ENCODE measurements at regions of chr5 and their contacts with region 1.

Region 1: DNA sequence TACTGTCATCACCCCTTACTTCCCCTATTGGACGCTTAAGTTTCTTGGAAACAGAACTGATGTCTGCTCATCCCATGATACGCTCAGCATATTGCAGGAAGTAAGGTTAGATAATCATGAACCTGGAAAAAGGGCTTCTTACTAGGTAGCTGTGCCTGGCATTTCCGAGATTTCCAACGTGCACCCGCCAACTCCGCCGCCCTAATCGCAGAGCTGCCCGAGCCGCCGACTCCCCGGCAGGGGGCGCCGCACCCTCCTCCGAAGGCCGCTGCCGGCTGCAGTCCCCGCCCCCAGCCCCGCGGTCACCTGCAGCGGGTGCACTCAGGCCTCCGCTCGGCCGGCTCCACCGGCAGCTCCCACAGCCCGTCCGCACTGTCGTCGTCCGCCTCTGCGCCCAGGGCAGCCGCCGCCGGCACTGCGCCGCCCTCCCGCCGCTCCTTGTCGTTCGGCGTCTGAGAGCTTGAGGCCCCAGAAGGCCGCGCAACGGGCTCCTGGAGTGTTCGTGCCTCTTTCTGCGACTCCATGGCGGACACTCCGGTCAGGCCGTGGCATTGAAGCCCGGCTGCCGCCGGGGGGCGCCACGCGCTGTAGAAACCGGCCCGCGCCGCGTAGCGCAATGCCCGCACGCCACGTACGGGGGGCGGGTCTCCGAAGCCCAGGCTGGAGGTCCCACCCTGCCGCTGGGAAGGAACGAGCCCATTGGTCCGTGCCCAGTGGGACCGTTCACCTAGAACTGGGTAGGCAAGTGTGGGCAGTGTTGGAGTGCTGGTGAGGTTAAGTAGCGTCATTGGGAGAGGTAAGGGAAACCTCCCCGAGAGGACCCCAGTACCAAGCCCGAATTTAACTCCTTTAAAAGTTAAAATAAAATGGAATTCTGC is at the start of gene DTWD2:
- DNase-seq: peak; percentile 94
- ATAC-seq: peak; percentile 92
- H3K4me3 Mint-ChIP-seq: peak within 1 kb of the TSS; percentile 77
- H3K27ac Mint-ChIP-seq: peak within 1 kb of the TSS; percentile 80
- H3K4me1 Mint-ChIP-seq: peaks cover 27% of the 10 kb centered on the region
- H3K27me3 Mint-ChIP-seq: no peaks in the 10 kb centered on the region
- CTCF ChIP-seq: peak; percentile 99
- total RNA-seq, gene DTWD2: 5.4 to 6.7 TPM

Region 2: GRCh38 chr5:118762291-118762690 is 225.9 kb before region 1 on chr5:
- CTCF ChIA-PET with region 1: no interaction called
- POLR2A ChIA-PET with region 1: no interaction called
- intact Hi-C with region 1: no loop called
- DNase-seq: no peak
- ATAC-seq: no peak
- H3K4me3 Mint-ChIP-seq: no peak overlapping the region
- H3K27ac Mint-ChIP-seq: no peak overlapping the region
- H3K4me1 Mint-ChIP-seq: no peaks in the 10 kb centered on the region
- H3K27me3 Mint-ChIP-seq: no peaks in the 10 kb centered on the region
- CTCF ChIP-seq: no peak

Region 3: GRCh38 chr5:118882666-118883065 is 105.6 kb before region 1 on chr5:
- CTCF ChIA-PET with region 1: no interaction called
- POLR2A ChIA-PET with region 1: no interaction called
- intact Hi-C with region 1: no loop called
- DNase-seq: no peak
- ATAC-seq: no peak
- H3K4me3 Mint-ChIP-seq: no peak overlapping the region
- H3K27ac Mint-ChIP-seq: no peak overlapping the region
- H3K4me1 Mint-ChIP-seq: no peaks in the 10 kb centered on the region
- H3K27me3 Mint-ChIP-seq: no peaks in the 10 kb centered on the region
- CTCF ChIP-seq: no peak

Region 4: GRCh38 chr5:119009131-119009530 is 20.9 kb after region 1 on chr5:
- CTCF ChIA-PET with region 1: interaction called, 34 read pairs
- POLR2A ChIA-PET with region 1: interaction called, 4 read pairs
- intact Hi-C with region 1: no loop called
- DNase-seq: no peak
- ATAC-seq: no peak
- H3K4me3 Mint-ChIP-seq: no peak overlapping the region
- H3K27ac Mint-ChIP-seq: no peak overlapping the region
- H3K4me1 Mint-ChIP-seq: no peaks in the 10 kb centered on the region
- H3K27me3 Mint-ChIP-seq: no peaks in the 10 kb centered on the region
- CTCF ChIP-seq: no peak

Region 5: DNA sequence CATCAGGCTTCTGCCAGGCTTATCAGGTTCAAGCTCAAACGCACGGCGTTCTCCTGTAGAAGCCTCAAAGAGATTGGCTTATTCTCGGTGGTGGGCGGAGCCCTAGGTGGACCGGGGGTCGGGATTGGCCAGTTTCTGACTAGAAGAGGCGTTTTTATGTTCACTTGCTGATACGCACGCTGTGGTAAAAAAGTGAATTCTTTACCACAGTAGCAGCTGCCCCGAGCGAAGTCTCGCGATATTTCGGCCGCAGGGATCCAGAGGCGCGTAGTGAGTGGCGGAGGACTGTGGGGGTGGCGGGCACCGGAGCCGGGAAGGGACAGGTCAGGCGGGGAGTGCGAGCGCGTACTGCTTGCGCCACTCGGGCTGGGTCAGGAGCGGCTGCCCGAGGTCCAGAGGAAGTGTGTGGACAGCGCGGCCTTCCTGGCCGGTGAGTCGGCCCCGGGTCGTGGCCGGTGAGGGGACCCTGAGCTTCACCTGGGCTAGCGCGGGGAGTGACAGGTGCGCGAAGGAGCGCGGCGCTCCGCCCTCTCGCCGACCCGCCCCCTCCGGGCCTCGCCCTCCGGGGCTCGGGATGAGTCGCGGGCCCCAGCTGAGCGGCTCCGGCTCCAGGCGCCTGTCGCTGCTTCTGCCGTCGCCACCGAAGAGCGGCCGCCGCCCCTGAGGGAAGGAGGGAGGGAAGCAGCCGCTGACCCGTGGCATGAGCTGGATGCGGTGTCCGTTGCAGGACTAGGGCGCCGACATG is 82.8 kb after region 1 on chr5 and contains the start of gene DMXL1:
- CTCF ChIA-PET with region 1: interaction called, 25 read pairs
- POLR2A ChIA-PET with region 1: no interaction called
- intact Hi-C with region 1: loop called (anchors 5 kb)
- DNase-seq: peak; percentile 99
- ATAC-seq: peak; percentile 87
- H3K4me3 Mint-ChIP-seq: peak within 1 kb of the TSS; percentile 85
- H3K27ac Mint-ChIP-seq: peak within 1 kb of the TSS; percentile 99
- H3K4me1 Mint-ChIP-seq: peaks cover 26% of the 10 kb centered on the region
- H3K27me3 Mint-ChIP-seq: peaks cover 1% of the 10 kb centered on the region
- CTCF ChIP-seq: no peak
- total RNA-seq, gene DMXL1: 20.8 to 23.3 TPM

Region 6: GRCh38 chr5:119255571-119256356 is 267.5 kb after region 1 on chr5:
- CTCF ChIA-PET with region 1: interaction called, 14 read pairs
- POLR2A ChIA-PET with region 1: no interaction called
- intact Hi-C with region 1: no loop called
- DNase-seq: peak; percentile 30
- ATAC-seq: peak; percentile 83
- H3K4me3 Mint-ChIP-seq: no peak overlapping the region
- H3K27ac Mint-ChIP-seq: no peak overlapping the region
- H3K4me1 Mint-ChIP-seq: peaks cover 14% of the 10 kb centered on the region
- H3K27me3 Mint-ChIP-seq: no peaks in the 10 kb centered on the region
- CTCF ChIP-seq: peak; percentile 19

Region 7: GRCh38 chr5:119315516-119315949 is 327.3 kb after region 1 on chr5:
- CTCF ChIA-PET with region 1: interaction called, 12 read pairs
- POLR2A ChIA-PET with region 1: no interaction called
- intact Hi-C with region 1: no loop called
- DNase-seq: peak; percentile 84
- ATAC-seq: peak; percentile 79
- H3K4me3 Mint-ChIP-seq: peak overlapping the region; percentile 38
- H3K27ac Mint-ChIP-seq: peak overlapping the region; percentile 81
- H3K4me1 Mint-ChIP-seq: peaks cover 93% of the 10 kb centered on the region
- H3K27me3 Mint-ChIP-seq: no peaks in the 10 kb centered on the region
- CTCF ChIP-seq: peak; percentile 70

Region 8: GRCh38 chr5:119435436-119436132 is 447.4 kb after region 1 on chr5:
- CTCF ChIA-PET with region 1: interaction called, 33 read pairs
- POLR2A ChIA-PET with region 1: no interaction called
- intact Hi-C with region 1: loop called (anchors 1 kb)
- DNase-seq: peak; percentile 89
- ATAC-seq: peak; percentile 78
- H3K4me3 Mint-ChIP-seq: no peak overlapping the region
- H3K27ac Mint-ChIP-seq: no peak overlapping the region
- H3K4me1 Mint-ChIP-seq: peaks cover 19% of the 10 kb centered on the region
- H3K27me3 Mint-ChIP-seq: peaks cover 4% of the 10 kb centered on the region
- CTCF ChIP-seq: peak; percentile 73

Measured in activated CD8-positive, alpha-beta T cell treated with anti-CD3 and anti-CD28 coated beads for 36 hours (primary cell).